ENCODE measurements at regions of chr16 and their contacts with region 1.

Region 1: GRCh38 chr16:8567750-8568617 is 22.3 kb downstream of the TMEM114 start:
- DNase-seq: peak; percentile 79
- H3K4me3 ChIP-seq: no peak overlapping the region
- H3K27ac ChIP-seq: no peak overlapping the region
- H3K4me1 ChIP-seq: no peaks in the 10 kb centered on the region
- H3K27me3 ChIP-seq: no peaks in the 10 kb centered on the region
- CTCF ChIP-seq: peak; percentile 97 to 99

Region 2: GRCh38 chr16:6682142-6682811 is 1885.7 kb before region 1 on chr16:
- CTCF ChIA-PET with region 1: no interaction called
- dilution Hi-C with region 1: no loop called
- in situ Hi-C with region 1: no loop called
- intact Hi-C with region 1: loop called (anchors 10 kb)
- DNase-seq: no peak
- H3K4me3 ChIP-seq: no peak overlapping the region
- H3K27ac ChIP-seq: no peak overlapping the region
- H3K4me1 ChIP-seq: no peaks in the 10 kb centered on the region
- H3K27me3 ChIP-seq: no peaks in the 10 kb centered on the region
- CTCF ChIP-seq: peak; percentile 34 to 54

Region 3: GRCh38 chr16:8621572-8622314 is 53.8 kb after region 1 on chr16 and contains the start of gene METTL22:
- CTCF ChIA-PET with region 1: no interaction called
- dilution Hi-C with region 1: no loop called
- in situ Hi-C with region 1: loop called in 1 of 2 experiments (anchors 5 kb)
- intact Hi-C with region 1: loop called (anchors 2 kb)
- DNase-seq: peak; percentile 74
- H3K4me3 ChIP-seq: peak within 1 kb of the TSS; percentile 63 to 85 (median 79)
- H3K27ac ChIP-seq: peak within 1 kb of the TSS; percentile 83
- H3K4me1 ChIP-seq: peaks cover 10% of the 10 kb centered on the region
- H3K27me3 ChIP-seq: no peaks in the 10 kb centered on the region
- CTCF ChIP-seq: no peak
- total RNA-seq, gene METTL22: 35.2 to 40.9 TPM

Region 4: DNA sequence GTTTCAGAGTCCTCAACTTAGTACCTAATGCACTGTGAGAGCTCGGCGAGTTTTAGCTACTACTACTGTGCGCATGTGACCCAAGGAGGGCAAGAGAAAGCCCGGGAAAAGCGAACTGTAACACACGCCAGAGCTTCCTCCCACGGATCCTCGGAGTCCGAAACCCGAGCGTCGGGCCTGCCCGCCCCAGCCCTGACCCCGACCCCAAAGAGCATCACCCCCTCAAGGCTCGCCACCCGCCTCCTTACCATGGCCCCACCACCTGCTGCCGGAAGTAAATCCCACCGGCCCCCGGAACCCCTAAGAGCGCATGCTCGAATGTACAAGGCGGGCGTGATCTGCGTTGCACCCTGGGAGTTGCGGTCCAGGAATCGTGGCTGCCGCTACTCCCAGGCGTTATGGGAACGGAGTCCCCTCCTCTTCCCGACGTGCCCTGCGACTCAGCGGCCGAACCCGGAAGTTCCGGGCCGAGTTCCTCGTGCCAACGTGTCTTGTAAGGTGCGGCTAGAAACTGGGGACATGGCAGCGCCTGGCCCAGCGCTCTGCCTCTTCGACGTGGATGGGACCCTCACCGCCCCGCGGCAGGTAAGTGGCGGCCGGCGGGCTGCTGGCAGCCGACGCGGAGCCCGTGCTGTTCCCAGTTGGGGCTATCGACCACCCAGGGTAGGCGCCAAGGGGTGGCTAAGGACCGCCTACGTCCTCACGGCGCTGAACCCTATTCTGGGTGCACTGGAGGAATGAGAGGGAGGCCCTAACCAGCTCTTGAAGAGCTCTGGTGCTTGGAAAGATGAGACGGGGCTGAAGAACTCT is 229.6 kb after region 1 on chr16 and contains the starts of genes PMM2 and TMEM186:
- CTCF ChIA-PET with region 1: no interaction called
- dilution Hi-C with region 1: no loop called
- in situ Hi-C with region 1: loop called (anchors 5 kb)
- intact Hi-C with region 1: loop called (anchors 1 kb)
- DNase-seq: peak; percentile 95
- H3K4me3 ChIP-seq: peak within 1 kb of the TSS; percentile 78 to 95 (median 82)
- H3K27ac ChIP-seq: peak within 1 kb of the TSS; percentile 88
- H3K4me1 ChIP-seq: peaks cover 15% of the 10 kb centered on the region
- H3K27me3 ChIP-seq: no peaks in the 10 kb centered on the region
- CTCF ChIP-seq: no peak
- total RNA-seq, gene PMM2: 36.2 to 67.8 TPM
- total RNA-seq, gene TMEM186: 4.5 to 9.8 TPM

Region 5: GRCh38 chr16:8850279-8850885 is 282.4 kb after region 1 on chr16:
- CTCF ChIA-PET with region 1: no interaction called
- dilution Hi-C with region 1: no loop called
- in situ Hi-C with region 1: no loop called
- intact Hi-C with region 1: no loop called
- DNase-seq: peak; percentile 80
- H3K4me3 ChIP-seq: no peak overlapping the region
- H3K27ac ChIP-seq: peak overlapping the region; percentile 18
- H3K4me1 ChIP-seq: peaks cover 27% of the 10 kb centered on the region
- H3K27me3 ChIP-seq: no peaks in the 10 kb centered on the region
- CTCF ChIP-seq: no peak

Region 6: GRCh38 chr16:8885674-8886592 is 317.9 kb after region 1 on chr16:
- CTCF ChIA-PET with region 1: no interaction called
- dilution Hi-C with region 1: no loop called
- in situ Hi-C with region 1: loop called (anchors 5 to 25 kb)
- intact Hi-C with region 1: no loop called
- DNase-seq: peak; percentile 51
- H3K4me3 ChIP-seq: no peak overlapping the region
- H3K27ac ChIP-seq: no peak overlapping the region
- H3K4me1 ChIP-seq: peaks cover 9% of the 10 kb centered on the region
- H3K27me3 ChIP-seq: no peaks in the 10 kb centered on the region
- CTCF ChIP-seq: no peak